K562 (cell line): ENCODE measurements at regions of chr12 and their contacts with region 1.

Region 1: DNA sequence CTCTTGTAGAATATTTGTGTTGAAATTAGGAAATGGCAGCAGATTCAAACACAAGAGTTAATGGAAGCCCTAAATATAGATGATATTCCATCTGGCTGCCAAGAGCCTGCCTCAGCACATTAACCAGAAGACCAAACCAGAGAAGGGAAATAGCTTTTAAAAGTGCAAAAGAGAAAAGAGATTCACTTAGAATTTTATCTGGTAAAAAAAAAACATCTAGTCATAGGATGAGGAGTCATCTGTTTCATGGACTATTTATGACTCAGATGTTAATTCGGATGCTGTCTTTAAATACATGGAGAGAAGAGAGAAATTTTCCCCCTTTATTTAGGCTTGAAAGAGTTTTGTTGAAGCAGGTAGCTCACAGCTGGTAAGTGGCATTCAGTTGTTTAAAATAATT is 201.6 kb upstream of the NUDT4 start:
- DNase-seq: no peak
- ATAC-seq: no peak
- H3K4me3 ChIP-seq: no peak overlapping the region
- H3K27ac ChIP-seq: no peak overlapping the region
- H3K4me1 ChIP-seq: peaks cover 0 to 5% of the 10 kb centered on the region in 2 experiments; a peak in 2 of 5 replicates
- H3K27me3 ChIP-seq: no peaks in the 10 kb centered on the region
- CTCF ChIP-seq: no peak
- EP300 ChIP-seq: no peak
- POLR2A ChIP-seq: no peak
- RAD21 ChIP-seq: no peak

Region 2: GRCh38 chr12:92912052-92912451 is 264.1 kb before region 1 on chr12:
- CTCF ChIA-PET with region 1: no interaction called
- POLR2A ChIA-PET with region 1: no interaction called
- in situ Hi-C with region 1: no loop called
- intact Hi-C with region 1: no loop called
- DNase-seq: no peak
- ATAC-seq: peak; percentile 62
- H3K4me3 ChIP-seq: no peak overlapping the region
- H3K27ac ChIP-seq: no peak overlapping the region
- H3K4me1 ChIP-seq: no peaks in the 10 kb centered on the region
- H3K27me3 ChIP-seq: no peaks in the 10 kb centered on the region
- CTCF ChIP-seq: no peak
- EP300 ChIP-seq: no peak
- POLR2A ChIP-seq: no peak
- RAD21 ChIP-seq: no peak

Region 3: DNA sequence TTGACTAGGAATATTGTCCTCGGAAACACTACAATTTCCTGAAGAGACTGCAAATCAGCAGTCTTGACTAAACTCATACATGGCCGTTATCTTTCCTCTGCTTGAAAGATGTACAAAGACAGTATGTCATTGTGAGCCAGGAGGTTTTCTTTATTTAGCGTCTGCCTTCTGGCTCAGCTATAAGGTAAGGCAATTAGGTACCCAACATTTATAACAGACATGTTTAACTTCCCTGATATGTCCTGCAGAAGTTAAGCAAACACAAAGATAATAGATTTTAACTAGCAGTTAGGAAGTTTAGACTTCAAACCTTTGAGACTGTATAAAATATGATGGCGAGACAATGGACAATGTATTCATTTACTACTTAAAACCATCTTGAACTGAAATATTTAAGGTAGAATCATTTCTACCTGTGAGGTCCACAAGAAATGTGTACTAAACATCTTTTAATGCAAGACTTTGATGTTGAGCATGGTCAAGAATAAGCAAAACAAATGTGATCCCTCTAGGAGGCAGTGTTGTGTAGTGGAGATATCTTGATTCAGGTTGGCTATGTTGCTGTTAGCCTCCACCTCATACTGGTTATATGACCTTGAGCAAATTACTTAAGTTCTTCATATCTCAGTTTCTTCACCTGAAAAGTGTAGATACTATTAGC is 150.9 kb before region 1 on chr12:
- CTCF ChIA-PET with region 1: no interaction called
- POLR2A ChIA-PET with region 1: no interaction called
- in situ Hi-C with region 1: no loop called
- intact Hi-C with region 1: no loop called
- DNase-seq: peak; percentile 28 to 74 (median 44)
- ATAC-seq: peak; percentile 82
- H3K4me3 ChIP-seq: no peak overlapping the region
- H3K27ac ChIP-seq: no peak overlapping the region
- H3K4me1 ChIP-seq: peaks cover 0 to 23% of the 10 kb centered on the region in 2 experiments; a peak in 3 of 5 replicates
- H3K27me3 ChIP-seq: no peaks in the 10 kb centered on the region
- CTCF ChIP-seq: peak; percentile 58 to 82 (median 66)
- EP300 ChIP-seq: no peak
- POLR2A ChIP-seq: no peak
- RAD21 ChIP-seq: peak; percentile 78 to 93

Region 4: GRCh38 chr12:93115646-93116045 is 60.5 kb before region 1 on chr12:
- CTCF ChIA-PET with region 1: no interaction called
- POLR2A ChIA-PET with region 1: no interaction called
- in situ Hi-C with region 1: no loop called
- intact Hi-C with region 1: loop called (anchors 2 kb)
- DNase-seq: peak in 1 of 4 experiments; percentile 24
- ATAC-seq: peak; percentile 48
- H3K4me3 ChIP-seq: no peak overlapping the region
- H3K27ac ChIP-seq: peak overlapping the region; percentile 49
- H3K4me1 ChIP-seq: peaks cover 12 to 23% of the 10 kb centered on the region in 2 experiments; a peak in 4 of 5 replicates
- H3K27me3 ChIP-seq: no peaks in the 10 kb centered on the region
- CTCF ChIP-seq: no peak
- EP300 ChIP-seq: no peak
- POLR2A ChIP-seq: no peak
- RAD21 ChIP-seq: no peak